Activated T-helper 2 cell treated with anti-CD3 and anti-CD28 coated beads, Interferon-gamma antibody, Interleukin-2, Interleukin-4, amounts not matched to agents 10 μg/mL and 5 μg/mL and 100 μg/mL, durations not matched to agents 14 hours and 24 hours and 36 hours (primary cell): ENCODE measurements at regions of chr4 and their contacts with region 1.

Region 1: DNA sequence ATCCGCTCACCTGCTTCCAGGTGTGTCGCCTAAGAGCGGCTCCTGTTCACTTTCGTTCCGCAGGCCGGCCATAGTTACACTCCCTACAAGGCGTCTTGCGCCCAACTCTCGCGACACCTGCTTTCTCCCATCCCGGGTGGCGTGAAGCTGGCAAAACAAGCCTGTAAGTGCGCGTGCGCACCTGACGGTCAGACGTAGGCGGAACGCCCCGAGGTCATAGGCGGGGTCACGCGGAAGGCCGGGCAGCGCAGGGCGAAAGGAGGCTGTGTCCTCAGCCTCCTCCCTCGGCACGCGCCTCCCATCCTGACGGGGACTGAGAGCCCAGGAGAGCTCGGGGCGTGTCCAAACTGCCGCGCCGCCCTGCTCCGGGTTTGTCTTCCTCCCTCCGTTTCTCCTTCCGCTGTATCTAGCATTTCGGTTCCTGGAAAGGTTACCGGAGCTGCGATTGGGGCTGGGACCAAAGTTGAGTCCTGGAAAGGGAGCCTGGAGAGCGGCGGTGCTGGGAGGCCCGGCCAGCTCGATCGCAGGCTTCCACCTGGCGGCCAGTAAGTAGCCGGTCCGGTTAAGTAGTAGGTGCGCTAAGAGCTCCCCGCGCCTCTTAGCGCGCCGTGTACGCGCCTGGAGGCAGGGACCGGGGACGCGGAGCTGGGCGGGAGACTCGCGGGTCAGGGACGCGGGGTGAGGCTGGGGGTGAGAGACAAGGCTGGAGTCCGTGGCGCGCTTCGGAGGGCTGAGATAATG is at the starts of genes ABHD18 and MFSD8:
- DNase-seq: peak; percentile 100
- H3K4me3 Mint-ChIP-seq: peak within 1 kb of the TSS; percentile 95
- H3K27ac Mint-ChIP-seq: peak within 1 kb of the TSS; percentile 93
- H3K4me1 Mint-ChIP-seq: peaks cover 26% of the 10 kb centered on the region
- H3K27me3 Mint-ChIP-seq: no peaks in the 10 kb centered on the region
- total RNA-seq, gene ABHD18: 21.0 and 23.9 TPM in 2 replicates
- total RNA-seq, gene MFSD8: 18.7 and 20.2 TPM in 2 replicates

Region 2: DNA sequence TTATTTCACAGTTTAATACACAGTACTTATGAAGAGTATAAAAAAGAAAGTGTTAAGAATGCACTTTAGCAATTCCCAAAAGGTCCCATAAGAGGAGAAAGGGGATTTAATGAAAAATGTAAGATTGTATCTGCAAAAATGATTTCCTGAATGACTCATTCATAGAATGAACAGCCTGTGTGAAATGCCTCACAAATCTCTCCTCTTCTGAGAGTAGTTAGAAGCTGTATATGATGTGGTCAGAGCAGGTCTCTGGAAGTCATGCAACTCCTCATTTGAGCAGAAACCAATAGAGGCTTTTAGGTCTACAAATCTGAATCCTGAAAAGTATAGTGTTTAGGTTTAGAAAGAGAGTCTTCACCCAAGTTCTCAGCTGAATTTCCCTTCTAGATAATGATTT is 713.8 kb before region 1 on chr4:
- intact Hi-C with region 1: no loop called
- DNase-seq: no peak
- H3K4me3 Mint-ChIP-seq: no peak overlapping the region
- H3K27ac Mint-ChIP-seq: no peak overlapping the region
- H3K4me1 Mint-ChIP-seq: no peaks in the 10 kb centered on the region
- H3K27me3 Mint-ChIP-seq: no peaks in the 10 kb centered on the region

Region 3: DNA sequence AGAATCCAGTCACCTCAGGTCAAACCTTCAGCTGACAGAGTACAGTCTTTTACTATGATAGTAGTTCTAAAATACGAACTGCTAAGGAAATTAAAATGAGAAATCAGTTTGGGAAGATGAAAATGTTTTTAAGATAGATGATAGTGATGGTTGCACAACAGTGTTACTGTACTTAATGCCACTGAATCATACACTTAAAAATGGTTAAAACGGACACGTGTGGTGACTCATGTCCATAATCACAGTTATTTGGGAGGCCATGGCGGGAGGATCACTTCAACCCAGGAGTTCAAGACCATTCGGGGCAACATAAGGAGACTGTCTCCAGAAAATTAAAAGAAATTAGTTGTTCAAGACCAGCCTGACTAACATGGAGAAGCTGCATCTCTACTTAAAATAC is 41.4 kb after region 1 on chr4:
- intact Hi-C with region 1: no loop called
- DNase-seq: no peak
- H3K4me3 Mint-ChIP-seq: no peak overlapping the region
- H3K27ac Mint-ChIP-seq: no peak overlapping the region
- H3K4me1 Mint-ChIP-seq: peaks cover 3% of the 10 kb centered on the region
- H3K27me3 Mint-ChIP-seq: no peaks in the 10 kb centered on the region

Region 4: GRCh38 chr4:128287871-128288688 is 322.8 kb after region 1 on chr4:
- intact Hi-C with region 1: loop called (anchors 1 kb)
- DNase-seq: peak; percentile 97
- H3K4me3 Mint-ChIP-seq: peak overlapping the region; percentile 95
- H3K27ac Mint-ChIP-seq: peak overlapping the region; percentile 91
- H3K4me1 Mint-ChIP-seq: peaks cover 29% of the 10 kb centered on the region
- H3K27me3 Mint-ChIP-seq: no peaks in the 10 kb centered on the region